ENCODE measurements at regions of chr1 and their contacts with region 1.

Region 1: GRCh38 chr1:207321079-207321789 is at the start of gene CD55:
- DNase-seq: peak; percentile 98 to 99
- H3K4me3 ChIP-seq: peak within 1 kb of the TSS; percentile 67
- H3K27ac ChIP-seq: peak within 1 kb of the TSS; percentile 87
- H3K4me1 ChIP-seq: peaks cover 47% of the 10 kb centered on the region
- H3K27me3 ChIP-seq: no peaks in the 10 kb centered on the region
- CTCF ChIP-seq: no peak; the same call in 1 of the 2 replicates
- total RNA-seq, gene CD55: 45.9 and 46.4 TPM in 2 replicates

Region 2: GRCh38 chr1:206895830-206896242 is 425.4 kb before region 1 on chr1:
- CTCF ChIA-PET with region 1: interaction called, 21 read pairs
- POLR2A ChIA-PET with region 1: interaction called, 4 read pairs
- intact Hi-C with region 1: no loop called
- DNase-seq: peak in 1 of 2 experiments; percentile 27
- H3K4me3 ChIP-seq: no peak overlapping the region
- H3K27ac ChIP-seq: peak overlapping the region; percentile 24; the same call in 1 of the 2 replicates
- H3K4me1 ChIP-seq: peaks cover 37% of the 10 kb centered on the region
- H3K27me3 ChIP-seq: no peaks in the 10 kb centered on the region
- CTCF ChIP-seq: no peak

Region 3: GRCh38 chr1:207052911-207053769 is 268.1 kb before region 1 on chr1 and contains the start of gene PFKFB2:
- CTCF ChIA-PET with region 1: no interaction called
- POLR2A ChIA-PET with region 1: interaction called, 8 read pairs
- intact Hi-C with region 1: loop called (anchors 1 kb)
- DNase-seq: peak; percentile 98 to 99
- H3K4me3 ChIP-seq: peak within 1 kb of the TSS; percentile 93
- H3K27ac ChIP-seq: peak within 1 kb of the TSS; percentile 92
- H3K4me1 ChIP-seq: peaks cover 26% of the 10 kb centered on the region
- H3K27me3 ChIP-seq: no peaks in the 10 kb centered on the region
- CTCF ChIP-seq: no peak; the same call in 1 of the 2 replicates
- total RNA-seq, gene PFKFB2: 16.3 and 28.0 TPM in 2 replicates

Region 4: GRCh38 chr1:207164086-207164485 is 157.1 kb before region 1 on chr1:
- CTCF ChIA-PET with region 1: no interaction called
- POLR2A ChIA-PET with region 1: no interaction called
- intact Hi-C with region 1: no loop called
- DNase-seq: no peak
- H3K4me3 ChIP-seq: no peak overlapping the region
- H3K27ac ChIP-seq: no peak overlapping the region
- H3K4me1 ChIP-seq: no peaks in the 10 kb centered on the region
- H3K27me3 ChIP-seq: no peaks in the 10 kb centered on the region
- CTCF ChIP-seq: no peak

Region 5: GRCh38 chr1:207181838-207182237 is 139.4 kb before region 1 on chr1:
- CTCF ChIA-PET with region 1: no interaction called
- POLR2A ChIA-PET with region 1: interaction called, 3 read pairs
- intact Hi-C with region 1: loop called (anchors 10 kb)
- DNase-seq: no peak
- H3K4me3 ChIP-seq: no peak overlapping the region
- H3K27ac ChIP-seq: no peak overlapping the region
- H3K4me1 ChIP-seq: no peaks in the 10 kb centered on the region
- H3K27me3 ChIP-seq: no peaks in the 10 kb centered on the region
- CTCF ChIP-seq: peak; percentile 45

Region 6: GRCh38 chr1:207240325-207241095 is 80.7 kb before region 1 on chr1:
- CTCF ChIA-PET with region 1: no interaction called
- POLR2A ChIA-PET with region 1: interaction called, 6 read pairs
- intact Hi-C with region 1: loop called (anchors 1 kb)
- DNase-seq: peak; percentile 61 to 97
- H3K4me3 ChIP-seq: peak overlapping the region; percentile 23
- H3K27ac ChIP-seq: peak overlapping the region; percentile 98
- H3K4me1 ChIP-seq: peaks cover 48% of the 10 kb centered on the region
- H3K27me3 ChIP-seq: no peaks in the 10 kb centered on the region
- CTCF ChIP-seq: no peak

Region 7: GRCh38 chr1:207298186-207298585 is 23.0 kb before region 1 on chr1:
- CTCF ChIA-PET with region 1: interaction called, 18 read pairs
- POLR2A ChIA-PET with region 1: interaction called, 6 read pairs
- intact Hi-C with region 1: no loop called
- DNase-seq: no peak
- H3K4me3 ChIP-seq: no peak overlapping the region
- H3K27ac ChIP-seq: peak overlapping the region; percentile 9
- H3K4me1 ChIP-seq: peaks cover 14% of the 10 kb centered on the region
- H3K27me3 ChIP-seq: no peaks in the 10 kb centered on the region
- CTCF ChIP-seq: no peak

Measured in PC-9 (cell line).